GM10248 (cell line): ENCODE measurements at regions of chr9 and their contacts with region 1.

Region 1: DNA sequence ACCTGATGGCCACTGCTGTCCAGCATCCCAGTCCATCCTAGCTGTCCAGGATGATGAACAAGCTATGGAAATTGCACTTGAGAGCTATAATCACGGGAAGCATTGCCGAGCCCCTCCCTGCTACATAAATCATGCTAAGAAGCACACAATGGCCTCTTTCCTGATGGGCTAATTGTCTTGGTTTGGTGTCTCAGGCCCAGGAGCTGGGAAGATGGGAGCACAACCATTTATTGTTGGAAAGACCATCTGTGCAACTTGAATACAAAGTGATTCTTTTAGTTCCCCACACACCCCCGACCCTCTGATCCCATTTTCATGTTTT is 80.4 kb downstream of the RGS3 start:
- DNase-seq: no peak
- CTCF ChIP-seq: no peak

Region 2: GRCh38 chr9:113564498-113565237 is 20.7 kb after region 1 on chr9:
- CTCF ChIA-PET with region 1: interaction called, 12 read pairs
- POLR2A ChIA-PET with region 1: no interaction called
- DNase-seq: no peak
- CTCF ChIP-seq: no peak